ENCODE measurements at regions of chr16 and their contacts with region 1.

Region 1: DNA sequence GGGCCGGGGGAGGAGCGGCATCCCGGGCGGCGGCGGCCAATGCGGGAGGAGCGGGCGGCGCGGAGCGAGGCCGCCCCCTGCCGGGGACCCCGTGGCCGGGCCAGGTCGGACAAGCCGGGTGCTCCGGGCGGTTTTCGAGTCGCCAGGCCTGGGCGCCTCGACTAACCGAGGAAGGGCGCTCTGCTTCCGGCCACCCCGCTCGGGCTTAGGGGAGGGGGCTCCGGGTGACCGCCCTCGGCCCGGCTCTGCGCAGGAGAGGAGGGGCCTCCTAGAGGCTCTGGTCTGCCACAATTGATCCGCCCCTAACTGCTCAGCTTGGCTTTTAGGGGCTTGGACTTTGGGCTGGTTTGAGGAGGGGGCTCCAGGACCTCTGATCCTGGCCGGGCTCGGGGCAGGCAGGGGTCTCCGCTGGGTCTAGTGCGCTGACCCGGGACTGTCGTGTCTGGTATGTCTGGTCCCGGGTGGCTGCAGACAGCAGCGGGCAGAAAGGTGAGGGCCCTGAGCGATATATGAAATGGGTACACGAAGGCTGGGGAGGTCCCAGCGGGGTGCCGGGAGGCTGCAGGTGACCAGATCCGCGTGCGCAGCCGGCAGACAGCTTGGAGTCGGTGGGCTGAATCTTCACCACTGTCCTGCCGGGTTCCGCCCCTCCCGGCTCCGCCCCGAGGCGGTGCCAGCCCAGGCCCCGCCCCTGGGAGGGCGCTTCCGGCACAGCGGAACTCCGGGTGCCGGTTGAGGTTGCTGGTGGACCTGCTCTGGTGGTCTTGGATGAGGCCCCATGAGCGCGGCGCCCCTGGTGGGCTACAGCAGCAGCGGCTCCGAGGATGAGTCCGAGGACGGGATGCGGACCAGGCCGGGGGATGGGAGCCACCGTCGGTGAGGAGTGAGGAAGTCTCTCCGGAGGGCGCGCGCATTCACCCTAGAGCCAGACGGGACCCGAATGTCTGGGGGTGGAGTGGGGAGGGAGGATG is at the start of gene USB1:
- DNase-seq: peak; percentile 89 to 95
- H3K4me3 ChIP-seq: peak within 1 kb of the TSS; percentile 60 to 84 (median 73)
- H3K27ac ChIP-seq: peak within 1 kb of the TSS; percentile 88 to 94 (median 92)
- H3K4me1 ChIP-seq: peaks cover 25 to 51% (median 44%) of the 10 kb centered on the region in 4 donors
- H3K27me3 ChIP-seq: no peaks in the 10 kb centered on the region
- CTCF ChIP-seq: peak in 5 of 7 experiments; percentile 26 to 88 (median 61)
- EP300 ChIP-seq: no peak
- POLR2A ChIP-seq: no peak
- total RNA-seq, gene USB1: 4.1 to 54.0 (median 8.1) TPM

Region 2: DNA sequence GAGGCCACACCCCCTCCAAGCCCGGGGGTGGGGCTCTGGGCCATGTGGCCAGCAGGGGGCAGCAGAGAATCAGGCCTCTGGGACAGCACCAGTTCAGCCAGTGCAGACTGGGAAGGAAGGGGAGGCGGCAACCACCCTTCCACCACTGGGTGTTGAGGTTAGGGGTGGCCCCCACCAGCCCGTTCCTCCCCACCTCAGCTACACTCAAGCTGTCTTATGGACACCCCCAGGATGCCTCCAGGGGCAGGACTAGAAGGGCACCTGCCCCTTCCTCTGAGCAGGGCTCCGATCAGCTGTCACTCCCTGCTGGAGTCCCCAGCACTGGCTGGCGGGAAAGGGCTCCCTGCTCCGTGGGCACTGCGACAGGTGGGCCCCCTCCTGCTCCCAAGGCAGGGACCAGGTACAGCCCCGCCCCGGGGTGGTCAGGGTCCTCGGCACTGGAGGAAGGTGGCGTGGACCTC is 243.6 kb before region 1 on chr16:
- intact Hi-C with region 1: loop called (anchors 10 kb)
- DNase-seq: peak; percentile 91
- H3K4me3 ChIP-seq: no peak overlapping the region
- H3K27ac ChIP-seq: peak overlapping the region in 3 of 5 donors; percentile 36 to 39 (median 36)
- H3K4me1 ChIP-seq: peaks cover 0 to 9% (median 8%) of the 10 kb centered on the region in 4 donors
- H3K27me3 ChIP-seq: no peaks in the 10 kb centered on the region
- CTCF ChIP-seq: peak in 5 of 7 experiments; percentile 88 to 98 (median 93)
- EP300 ChIP-seq: no peak
- POLR2A ChIP-seq: no peak

Measured in stomach (tissue), 19 donors.